ENCODE measurements at regions of chr4 and their contacts with region 1.

Region 1: DNA sequence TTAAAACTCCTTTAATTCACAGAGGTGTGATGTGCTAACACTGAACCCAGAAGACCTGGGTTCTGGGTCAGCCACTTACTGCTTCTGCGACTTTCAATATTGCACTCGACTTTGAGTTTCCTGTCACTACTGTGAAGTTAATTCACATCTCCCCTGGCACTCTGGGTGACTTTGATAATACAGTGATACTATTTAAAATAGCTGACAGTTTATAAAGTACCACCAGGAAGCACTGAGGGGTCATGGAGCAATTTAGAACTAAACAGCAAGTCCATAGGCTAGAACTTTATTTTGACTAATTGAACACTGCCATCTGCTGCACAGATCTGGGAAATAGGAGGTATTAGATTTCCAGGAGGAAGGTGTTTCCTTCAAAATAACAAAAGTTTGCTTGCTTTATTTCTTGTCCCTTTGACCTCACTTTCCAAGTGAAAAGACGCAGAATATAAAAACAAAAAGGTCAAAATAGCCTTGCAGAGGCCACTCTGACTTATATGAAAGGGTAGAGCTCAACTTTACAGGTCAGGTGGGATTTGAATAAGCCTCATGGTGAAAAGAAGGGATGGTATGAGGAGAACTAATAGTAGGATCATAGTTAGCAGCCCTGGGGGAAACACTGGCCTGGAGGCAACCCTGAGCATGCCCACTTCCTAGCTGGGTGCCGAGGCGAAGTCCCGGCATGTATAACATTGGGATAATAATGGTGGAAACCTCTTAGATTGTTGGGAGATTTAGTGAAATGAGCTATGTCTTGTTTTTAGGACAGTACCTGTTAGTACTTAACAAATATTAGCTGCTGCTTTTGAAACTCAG is 53.4 kb downstream of the ZNF518B start:
- DNase-seq: peak; percentile 17
- H3K4me3 Mint-ChIP-seq: no peak overlapping the region
- H3K27ac Mint-ChIP-seq: no peak overlapping the region
- H3K4me1 Mint-ChIP-seq: no peaks in the 10 kb centered on the region
- H3K27me3 Mint-ChIP-seq: no peaks in the 10 kb centered on the region
- CTCF ChIP-seq: no peak

Region 2: GRCh38 chr4:10018818-10019461 is 384.9 kb before region 1 on chr4:
- CTCF ChIA-PET with region 1: no interaction called
- intact Hi-C with region 1: loop called (anchors 5 kb)
- DNase-seq: peak; percentile 90
- H3K4me3 Mint-ChIP-seq: peak overlapping the region; percentile 81
- H3K27ac Mint-ChIP-seq: peak overlapping the region; percentile 74
- H3K4me1 Mint-ChIP-seq: no peaks in the 10 kb centered on the region
- H3K27me3 Mint-ChIP-seq: peaks cover 6% of the 10 kb centered on the region
- CTCF ChIP-seq: peak; percentile 82

Region 3: DNA sequence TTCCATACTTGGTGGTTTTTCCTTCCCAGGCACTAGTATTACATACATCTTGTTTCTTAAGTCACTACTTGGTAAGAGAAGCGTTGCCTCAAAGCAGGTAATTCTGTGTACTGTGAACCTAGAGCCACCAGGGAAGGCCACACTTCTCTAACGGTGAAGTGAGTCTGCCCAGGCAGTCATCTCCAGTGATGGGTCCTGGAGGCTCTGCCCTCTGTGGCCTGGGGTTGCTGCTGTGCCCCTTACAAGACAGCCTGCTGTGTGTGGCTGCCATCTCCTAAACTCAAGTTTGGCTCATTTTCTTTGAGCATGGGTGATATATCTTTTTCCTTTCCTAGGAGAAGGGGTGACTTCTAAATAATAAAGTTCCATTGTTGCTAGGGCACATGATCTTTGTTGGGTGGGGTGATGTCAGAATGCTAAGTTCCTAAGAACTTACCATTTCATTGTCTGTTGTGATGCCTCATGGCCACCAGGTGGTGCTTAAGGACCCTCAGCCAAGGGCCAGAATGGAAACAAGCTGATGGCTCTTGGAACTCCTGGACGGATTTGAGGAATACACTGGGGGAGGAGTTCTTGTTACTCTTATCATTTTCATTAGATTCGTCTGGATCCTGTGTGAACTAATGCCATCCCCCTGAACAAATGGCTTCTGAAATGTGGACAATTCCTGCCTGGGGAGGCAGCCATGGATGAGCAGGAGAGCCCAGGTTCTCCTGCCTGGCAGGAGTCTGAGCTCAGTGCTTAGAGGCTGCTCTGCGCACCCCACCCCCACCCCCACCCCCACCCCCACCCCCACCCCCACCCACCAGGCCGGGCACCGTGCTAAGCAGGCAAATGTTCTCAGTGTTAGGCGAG is 246.1 kb before region 1 on chr4:
- CTCF ChIA-PET with region 1: interaction called, 7 read pairs
- intact Hi-C with region 1: loop called (anchors 2 kb)
- DNase-seq: peak; percentile 54
- H3K4me3 Mint-ChIP-seq: no peak overlapping the region
- H3K27ac Mint-ChIP-seq: no peak overlapping the region
- H3K4me1 Mint-ChIP-seq: no peaks in the 10 kb centered on the region
- H3K27me3 Mint-ChIP-seq: peaks cover 22% of the 10 kb centered on the region
- CTCF ChIP-seq: peak; percentile 29

Region 4: GRCh38 chr4:10164877-10165283 is 239.0 kb before region 1 on chr4:
- CTCF ChIA-PET with region 1: no interaction called
- intact Hi-C with region 1: loop called (anchors 2 kb)
- DNase-seq: peak; percentile 24
- H3K4me3 Mint-ChIP-seq: no peak overlapping the region
- H3K27ac Mint-ChIP-seq: no peak overlapping the region
- H3K4me1 Mint-ChIP-seq: no peaks in the 10 kb centered on the region
- H3K27me3 Mint-ChIP-seq: peaks cover 17% of the 10 kb centered on the region
- CTCF ChIP-seq: no peak

Region 5: GRCh38 chr4:10186228-10187214 is 217.3 kb before region 1 on chr4:
- CTCF ChIA-PET with region 1: no interaction called
- intact Hi-C with region 1: no loop called
- DNase-seq: no peak
- H3K4me3 Mint-ChIP-seq: no peak overlapping the region
- H3K27ac Mint-ChIP-seq: no peak overlapping the region
- H3K4me1 Mint-ChIP-seq: no peaks in the 10 kb centered on the region
- H3K27me3 Mint-ChIP-seq: peaks cover 42% of the 10 kb centered on the region
- CTCF ChIP-seq: no peak

Measured in Calu3 (cell line).